ENCODE measurements at regions of chr7 and their contacts with region 1.

Region 1: DNA sequence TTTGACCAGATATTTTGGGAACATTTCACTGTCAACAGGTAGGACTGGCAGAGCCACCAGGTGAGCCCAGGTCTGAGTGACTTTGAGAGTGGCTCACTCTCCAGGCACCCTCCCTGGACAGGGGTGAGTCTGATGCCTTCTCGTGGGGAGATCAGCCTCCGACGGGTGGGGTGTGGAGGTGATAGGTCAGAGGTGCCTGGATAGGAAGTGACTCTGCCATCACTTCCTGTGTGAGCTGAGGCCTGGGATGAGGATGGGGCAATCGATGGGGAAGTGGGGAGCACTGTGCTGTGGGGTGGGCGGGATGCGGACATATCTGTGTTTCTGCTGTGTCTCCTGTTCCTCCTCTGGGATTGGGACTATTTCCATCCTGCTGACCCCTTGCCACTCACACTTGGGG is 34.6 kb downstream of the IFT22 start:
- DNase-seq: no peak
- H3K4me3 ChIP-seq: no peak overlapping the region
- H3K27ac ChIP-seq: no peak overlapping the region
- H3K4me1 ChIP-seq: peaks cover 0 to 2% of the 10 kb centered on the region in 2 experiments; a peak in 1 of 4 replicates
- H3K27me3 ChIP-seq: peaks cover 23% of the 10 kb centered on the region
- CTCF ChIP-seq: no peak
- EP300 ChIP-seq: no peak
- RAD21 ChIP-seq: no peak

Region 2: GRCh38 chr7:101153969-101154692 is 132.9 kb before region 1 on chr7 and contains the start of gene AP1S1:
- CTCF ChIA-PET with region 1: interaction called, 15 read pairs
- POLR2A ChIA-PET with region 1: no interaction called
- DNase-seq: peak; percentile 100
- H3K4me3 ChIP-seq: peak within 1 kb of the TSS; percentile 65 to 88
- H3K27ac ChIP-seq: peak within 1 kb of the TSS; percentile 38 to 84
- H3K4me1 ChIP-seq: peaks cover 7 to 15% of the 10 kb centered on the region in 2 experiments; a peak in 2 of 4 replicates
- H3K27me3 ChIP-seq: no peaks in the 10 kb centered on the region
- CTCF ChIP-seq: no peak
- EP300 ChIP-seq: peak in 1 of 2 experiments; percentile 52; a peak in 3 of 4 replicates
- RAD21 ChIP-seq: no peak; the same call in 1 of the 2 replicates
- polyA plus RNA-seq, gene AP1S1: 616 and 704 TPM in 2 replicates

Region 3: GRCh38 chr7:101235050-101235449 is 52.0 kb before region 1 on chr7:
- CTCF ChIA-PET with region 1: interaction called, 30 read pairs
- POLR2A ChIA-PET with region 1: no interaction called
- DNase-seq: peak; percentile 71
- H3K4me3 ChIP-seq: no peak overlapping the region
- H3K27ac ChIP-seq: no peak overlapping the region
- H3K4me1 ChIP-seq: peaks cover 0 to 5% of the 10 kb centered on the region in 2 experiments; a peak in 1 of 4 replicates
- H3K27me3 ChIP-seq: no peaks in the 10 kb centered on the region
- CTCF ChIP-seq: peak; percentile 61
- EP300 ChIP-seq: no peak
- RAD21 ChIP-seq: peak; percentile 42

Region 4: GRCh38 chr7:101251871-101252659 is 35.0 kb before region 1 on chr7:
- CTCF ChIA-PET with region 1: interaction called, 53 read pairs
- POLR2A ChIA-PET with region 1: interaction called, 3 read pairs
- DNase-seq: peak; percentile 99
- H3K4me3 ChIP-seq: peak overlapping the region; percentile 69 to 89
- H3K27ac ChIP-seq: peak overlapping the region; percentile 75 to 85
- H3K4me1 ChIP-seq: peaks cover 0 to 3% of the 10 kb centered on the region in 2 experiments; a peak in 1 of 4 replicates
- H3K27me3 ChIP-seq: 0 out of 2 replicates have a peak, but pooled peaks cover 4% of the 10 kb centered on the region
- CTCF ChIP-seq: no peak
- EP300 ChIP-seq: no peak
- RAD21 ChIP-seq: no peak

Region 5: GRCh38 chr7:101273206-101273605 is 13.8 kb before region 1 on chr7:
- CTCF ChIA-PET with region 1: interaction called, 21 read pairs
- POLR2A ChIA-PET with region 1: no interaction called
- DNase-seq: no peak
- H3K4me3 ChIP-seq: no peak overlapping the region
- H3K27ac ChIP-seq: no peak overlapping the region
- H3K4me1 ChIP-seq: no peaks in the 10 kb centered on the region
- H3K27me3 ChIP-seq: peaks cover 23% of the 10 kb centered on the region
- CTCF ChIP-seq: no peak
- EP300 ChIP-seq: no peak
- RAD21 ChIP-seq: no peak

Region 6: GRCh38 chr7:101308245-101309085 is 21.4 kb after region 1 on chr7:
- CTCF ChIA-PET with region 1: interaction called, 14 read pairs
- POLR2A ChIA-PET with region 1: no interaction called
- DNase-seq: peak; percentile 80
- H3K4me3 ChIP-seq: peak overlapping the region; percentile 37 to 46; a peak in 3 of 4 replicates
- H3K27ac ChIP-seq: no peak overlapping the region
- H3K4me1 ChIP-seq: no peaks in the 10 kb centered on the region; a peak in 1 of 4 replicates
- H3K27me3 ChIP-seq: peaks cover 4% of the 10 kb centered on the region; the same call in 1 of the 2 replicates
- CTCF ChIP-seq: no peak
- EP300 ChIP-seq: no peak
- RAD21 ChIP-seq: no peak